Activated naive CD4-positive, alpha-beta T cell treated with anti-CD3 and anti-CD28 coated beads, Interleukin-2, amount 10 ng/mL, durations not matched to agents 7 days and 5 days (primary cell): ENCODE measurements at regions of chr5 and their contacts with region 1.

Region 1: GRCh38 chr5:141825791-141826560 is 52.2 kb downstream of the PCDH1 start:
- DNase-seq: peak; percentile 27
- H3K4me3 Mint-ChIP-seq: no peak overlapping the region
- H3K27ac Mint-ChIP-seq: no peak overlapping the region
- H3K4me1 Mint-ChIP-seq: no peaks in the 10 kb centered on the region
- H3K27me3 Mint-ChIP-seq: peaks cover 63% of the 10 kb centered on the region

Region 2: DNA sequence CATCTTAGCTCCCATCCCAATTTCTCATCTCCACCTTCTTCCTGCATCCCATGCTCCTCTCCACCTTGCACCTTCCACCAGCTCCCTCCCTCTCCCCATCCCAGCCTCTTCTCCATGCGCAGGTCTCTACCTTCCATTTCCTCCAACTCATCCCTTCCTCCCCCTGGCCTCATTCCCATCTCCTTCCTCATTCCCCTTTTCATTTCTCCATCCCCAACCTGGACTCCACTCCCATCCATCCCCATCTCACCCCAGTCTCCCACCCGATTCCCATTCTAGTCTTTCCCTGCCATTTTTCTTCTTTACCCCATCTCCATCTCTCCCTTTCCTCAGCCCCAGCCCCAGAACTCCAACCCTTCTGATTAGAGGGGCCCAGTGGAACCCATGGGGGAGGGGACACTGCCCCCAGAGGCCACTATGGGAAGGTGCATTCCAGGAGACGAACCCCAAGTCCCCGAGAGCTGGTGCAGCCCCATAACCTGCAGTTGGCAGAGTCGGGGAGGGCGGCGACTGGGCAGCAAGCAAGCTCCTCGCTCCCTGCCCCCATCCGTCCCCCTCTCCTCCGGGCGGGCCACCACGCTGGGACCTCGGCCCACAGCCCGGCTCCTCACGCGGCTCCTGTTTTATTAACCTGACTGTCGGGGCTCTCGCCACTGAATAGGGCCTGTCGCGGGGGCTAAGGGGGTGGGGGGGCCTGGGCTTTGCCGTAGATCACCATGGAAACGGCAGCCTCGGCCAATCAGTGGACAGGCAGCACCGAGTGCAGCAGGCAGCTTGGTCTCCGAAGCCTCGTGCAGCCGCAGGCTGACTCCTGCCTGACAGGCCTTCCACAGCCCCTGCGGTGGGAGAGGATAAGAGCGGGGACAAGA is 14.5 kb before region 1 on chr5:
- CTCF ChIA-PET with region 1: interaction called, 31 read pairs
- DNase-seq: peak; percentile 45
- H3K4me3 Mint-ChIP-seq: no peak overlapping the region
- H3K27ac Mint-ChIP-seq: no peak overlapping the region
- H3K4me1 Mint-ChIP-seq: no peaks in the 10 kb centered on the region
- H3K27me3 Mint-ChIP-seq: peaks cover 89% of the 10 kb centered on the region

Region 3: GRCh38 chr5:141835928-141836670 is 10.1 kb after region 1 on chr5:
- CTCF ChIA-PET with region 1: interaction called, 15 read pairs
- DNase-seq: no peak
- H3K4me3 Mint-ChIP-seq: no peak overlapping the region
- H3K27ac Mint-ChIP-seq: no peak overlapping the region
- H3K4me1 Mint-ChIP-seq: peaks cover 15% of the 10 kb centered on the region
- H3K27me3 Mint-ChIP-seq: peaks cover 71% of the 10 kb centered on the region